Endothelial cell of umbilical vein (primary cell): ENCODE measurements at regions of chr5 and their contacts with region 1.

Region 1: DNA sequence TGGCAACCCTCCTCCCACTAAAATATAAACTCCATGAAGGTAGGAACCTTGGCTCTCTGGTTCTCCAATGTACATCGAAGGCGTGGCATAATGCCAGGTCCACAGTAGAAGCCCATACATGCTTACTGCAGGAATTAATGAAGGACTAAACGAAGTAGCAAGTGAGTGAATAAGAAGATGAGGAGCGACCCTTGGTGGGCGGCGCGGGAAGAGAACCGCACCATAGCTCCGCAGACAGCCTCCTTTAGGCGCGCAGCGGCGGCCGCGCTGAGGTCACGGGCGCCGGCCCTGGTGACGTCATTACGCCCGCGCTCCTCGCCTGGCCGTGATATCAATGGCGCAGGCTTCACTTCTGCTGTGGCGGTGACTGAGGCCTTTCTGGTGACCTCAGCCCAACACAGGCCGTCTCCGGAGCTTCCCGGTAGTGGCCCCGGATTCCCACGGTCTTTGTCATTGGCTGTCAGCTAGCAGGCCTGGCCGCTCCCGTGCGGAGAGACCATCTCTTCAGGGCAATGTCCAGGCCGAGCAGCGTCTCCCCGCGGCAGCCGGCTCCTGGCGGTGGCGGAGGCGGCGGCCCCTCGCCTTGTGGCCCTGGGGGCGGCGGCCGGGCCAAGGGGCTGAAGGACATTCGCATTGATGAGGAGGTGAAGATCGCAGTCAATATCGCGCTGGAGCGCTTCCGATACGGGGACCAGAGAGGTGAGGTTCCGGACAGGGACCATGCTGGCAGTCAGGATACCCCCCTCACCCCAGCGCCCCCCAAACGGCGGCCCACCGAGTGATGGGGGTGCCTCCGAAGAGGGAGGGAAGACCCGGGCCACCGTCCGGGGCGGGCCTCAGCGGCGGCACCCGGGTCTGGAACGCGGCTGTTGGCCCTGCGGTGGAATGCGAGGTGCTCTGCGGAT is at the start of gene YTHDC2:
- DNase-seq: peak; percentile 90
- H3K4me3 ChIP-seq: peak within 1 kb of the TSS; percentile 72 to 91 (median 87)
- H3K27ac ChIP-seq: peak within 1 kb of the TSS; percentile 70
- H3K4me1 ChIP-seq: peaks cover 15% of the 10 kb centered on the region
- H3K27me3 ChIP-seq: peaks cover 2 to 12% of the 10 kb centered on the region in 2 experiments
- CTCF ChIP-seq: peak; percentile 9 to 34
- POLR2A ChIP-seq: peak; percentile 92
- total RNA-seq, gene YTHDC2: 33.2 and 40.7 TPM in 2 replicates

Region 2: GRCh38 chr5:112976432-112977309 is 537.0 kb before region 1 on chr5 and contains the start of gene DCP2:
- CTCF ChIA-PET with region 1: no interaction called
- POLR2A ChIA-PET with region 1: interaction called, 3 read pairs
- dilution Hi-C with region 1: no loop called
- intact Hi-C with region 1: loop called (anchors 1 kb)
- DNase-seq: peak; percentile 99
- H3K4me3 ChIP-seq: peak within 1 kb of the TSS; percentile 98 to 99 (median 99)
- H3K27ac ChIP-seq: peak within 1 kb of the TSS; percentile 48
- H3K4me1 ChIP-seq: peaks cover 21% of the 10 kb centered on the region
- H3K27me3 ChIP-seq: no peaks in the 10 kb centered on the region
- CTCF ChIP-seq: no peak
- POLR2A ChIP-seq: peak; percentile 97
- total RNA-seq, gene DCP2: 49.1 and 60.0 TPM in 2 replicates

Region 3: DNA sequence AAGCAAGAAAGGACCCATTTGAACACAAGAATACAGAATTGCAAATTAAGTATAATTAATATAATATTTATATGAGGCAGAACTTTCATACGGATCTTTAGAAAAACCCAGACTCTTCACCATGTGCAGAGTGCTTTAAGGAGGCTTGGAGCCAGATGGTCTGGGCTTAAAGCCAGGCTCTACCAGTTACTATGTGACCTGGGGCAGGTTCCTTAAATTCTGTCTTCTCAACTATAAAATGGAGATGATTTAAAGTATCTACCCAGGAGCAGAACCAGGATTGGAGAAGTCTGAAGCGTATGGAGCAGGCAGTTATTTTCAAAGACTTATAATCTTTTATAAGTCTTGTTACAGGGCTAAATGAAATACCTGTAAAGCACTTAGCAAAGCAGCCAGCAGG is 281.0 kb before region 1 on chr5:
- CTCF ChIA-PET with region 1: no interaction called
- POLR2A ChIA-PET with region 1: no interaction called
- dilution Hi-C with region 1: no loop called
- intact Hi-C with region 1: loop called (anchors 10 kb)
- DNase-seq: peak; percentile 60
- H3K4me3 ChIP-seq: no peak overlapping the region
- H3K27ac ChIP-seq: no peak overlapping the region
- H3K4me1 ChIP-seq: peaks cover 15% of the 10 kb centered on the region
- H3K27me3 ChIP-seq: no peaks in the 10 kb centered on the region
- CTCF ChIP-seq: no peak
- POLR2A ChIP-seq: no peak

Region 4: GRCh38 chr5:113330533-113331208 is 183.0 kb before region 1 on chr5:
- CTCF ChIA-PET with region 1: interaction called, 263 read pairs
- POLR2A ChIA-PET with region 1: no interaction called
- dilution Hi-C with region 1: no loop called
- intact Hi-C with region 1: no loop called
- DNase-seq: peak; percentile 75
- H3K4me3 ChIP-seq: no peak overlapping the region
- H3K27ac ChIP-seq: no peak overlapping the region
- H3K4me1 ChIP-seq: peaks cover 9% of the 10 kb centered on the region
- H3K27me3 ChIP-seq: no peaks in the 10 kb centered on the region
- CTCF ChIP-seq: peak; percentile 20 to 30
- POLR2A ChIP-seq: no peak

Region 5: DNA sequence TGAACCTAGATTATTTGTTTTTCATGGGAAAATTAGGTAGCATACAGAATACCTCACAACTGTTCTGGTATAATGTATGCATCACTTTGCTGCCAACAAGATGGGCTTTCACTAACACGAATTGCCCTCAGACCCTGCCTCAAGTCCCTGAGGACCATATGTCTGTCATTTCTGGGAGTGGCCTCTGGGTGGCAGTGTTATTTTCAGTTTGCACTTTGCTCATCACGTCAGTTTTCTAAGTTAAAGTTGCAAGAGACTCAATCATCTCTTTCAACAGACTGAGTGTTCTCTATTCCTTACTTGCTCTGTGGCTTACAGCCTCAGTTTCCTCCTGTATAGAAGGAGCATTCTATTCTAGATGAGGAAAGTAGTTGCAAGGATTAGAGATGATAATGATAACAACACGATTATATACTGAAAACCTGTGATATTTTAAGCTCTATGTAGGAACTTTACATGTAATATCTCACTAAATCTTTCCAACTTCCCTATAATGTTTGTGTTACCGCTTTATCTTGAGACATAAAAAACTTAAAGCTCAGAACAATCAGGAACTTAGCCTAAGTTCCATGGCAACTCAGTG is 134.6 kb before region 1 on chr5:
- CTCF ChIA-PET with region 1: interaction called, 77 read pairs
- POLR2A ChIA-PET with region 1: no interaction called
- dilution Hi-C with region 1: no loop called
- intact Hi-C with region 1: loop called (anchors 1 kb)
- DNase-seq: peak; percentile 84
- H3K4me3 ChIP-seq: no peak overlapping the region
- H3K27ac ChIP-seq: no peak overlapping the region
- H3K4me1 ChIP-seq: peaks cover 28% of the 10 kb centered on the region
- H3K27me3 ChIP-seq: no peaks in the 10 kb centered on the region
- CTCF ChIP-seq: peak; percentile 67 to 76
- POLR2A ChIP-seq: no peak

Region 6: GRCh38 chr5:113474100-113474728 is 39.4 kb before region 1 on chr5:
- CTCF ChIA-PET with region 1: no interaction called
- POLR2A ChIA-PET with region 1: no interaction called
- dilution Hi-C with region 1: no loop called
- intact Hi-C with region 1: no loop called
- DNase-seq: no peak
- H3K4me3 ChIP-seq: no peak overlapping the region
- H3K27ac ChIP-seq: no peak overlapping the region
- H3K4me1 ChIP-seq: no peaks in the 10 kb centered on the region
- H3K27me3 ChIP-seq: peaks cover 0 to 4% of the 10 kb centered on the region in 2 experiments
- CTCF ChIP-seq: no peak
- POLR2A ChIP-seq: no peak

Region 7: DNA sequence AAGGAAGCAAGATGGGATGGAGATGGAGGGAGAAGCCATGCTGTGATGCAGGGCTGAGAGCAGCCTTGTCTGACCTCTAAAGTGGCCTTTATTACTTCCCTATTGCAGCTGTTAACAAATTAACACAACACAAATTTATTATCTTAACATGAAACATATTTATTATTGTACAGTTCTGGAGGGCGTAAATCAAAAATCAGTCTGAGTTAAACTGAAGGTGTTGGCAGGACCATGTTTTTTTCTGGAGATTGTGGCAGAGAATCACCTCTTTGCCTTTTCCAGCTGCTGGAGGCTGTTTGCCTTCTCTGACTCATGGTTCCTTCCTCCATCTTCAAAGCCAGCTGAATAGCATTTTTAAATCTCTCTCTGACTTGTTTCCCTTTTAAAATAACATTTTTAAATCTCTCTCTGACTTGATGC is 18.2 kb before region 1 on chr5:
- CTCF ChIA-PET with region 1: interaction called, 15 read pairs
- POLR2A ChIA-PET with region 1: no interaction called
- dilution Hi-C with region 1: no loop called
- intact Hi-C with region 1: no loop called
- DNase-seq: peak; percentile 88
- H3K4me3 ChIP-seq: no peak overlapping the region
- H3K27ac ChIP-seq: no peak overlapping the region
- H3K4me1 ChIP-seq: peaks cover 9% of the 10 kb centered on the region
- H3K27me3 ChIP-seq: peaks cover 3 to 4% of the 10 kb centered on the region in 2 experiments
- CTCF ChIP-seq: no peak
- POLR2A ChIP-seq: no peak

Region 8: GRCh38 chr5:113606298-113607134 is 92.9 kb after region 1 on chr5:
- CTCF ChIA-PET with region 1: interaction called, 21 read pairs
- POLR2A ChIA-PET with region 1: no interaction called
- dilution Hi-C with region 1: no loop called
- intact Hi-C with region 1: loop called (anchors 1 kb)
- DNase-seq: peak; percentile 82
- H3K4me3 ChIP-seq: peak overlapping the region in 2 of 3 experiments; percentile 23 to 60
- H3K27ac ChIP-seq: no peak overlapping the region
- H3K4me1 ChIP-seq: peaks cover 8% of the 10 kb centered on the region
- H3K27me3 ChIP-seq: no peaks in the 10 kb centered on the region
- CTCF ChIP-seq: peak; percentile 62 to 65
- POLR2A ChIP-seq: no peak

Region 9: GRCh38 chr5:113900807-113901206 is 387.2 kb after region 1 on chr5:
- CTCF ChIA-PET with region 1: no interaction called
- POLR2A ChIA-PET with region 1: no interaction called
- dilution Hi-C with region 1: no loop called
- intact Hi-C with region 1: no loop called
- DNase-seq: no peak
- H3K4me3 ChIP-seq: no peak overlapping the region
- H3K27ac ChIP-seq: no peak overlapping the region
- H3K4me1 ChIP-seq: no peaks in the 10 kb centered on the region
- H3K27me3 ChIP-seq: no peaks in the 10 kb centered on the region
- CTCF ChIP-seq: no peak
- POLR2A ChIP-seq: no peak